ENCODE measurements at regions of chr6 and their contacts with region 1.

Region 1: GRCh38 chr6:34757687-34758274 is 476 bp downstream of the SNRPC start:
- DNase-seq: no peak
- H3K4me3 ChIP-seq: peak overlapping the region; percentile 94
- H3K27ac ChIP-seq: peak overlapping the region; percentile 91; the same call in 1 of the 2 replicates
- H3K4me1 ChIP-seq: peaks cover 8% of the 10 kb centered on the region
- H3K27me3 ChIP-seq: no peaks in the 10 kb centered on the region
- CTCF ChIP-seq: no peak

Region 2: GRCh38 chr6:34182751-34183531 is 574.8 kb before region 1 on chr6:
- CTCF ChIA-PET with region 1: no interaction called
- POLR2A ChIA-PET with region 1: no interaction called
- intact Hi-C with region 1: no loop called
- DNase-seq: no peak
- H3K4me3 ChIP-seq: no peak overlapping the region
- H3K27ac ChIP-seq: no peak overlapping the region
- H3K4me1 ChIP-seq: peaks cover 14% of the 10 kb centered on the region
- H3K27me3 ChIP-seq: no peaks in the 10 kb centered on the region
- CTCF ChIP-seq: no peak

Region 3: GRCh38 chr6:34459899-34460593 is 297.7 kb before region 1 on chr6:
- CTCF ChIA-PET with region 1: no interaction called
- POLR2A ChIA-PET with region 1: no interaction called
- intact Hi-C with region 1: loop called (anchors 10 kb)
- DNase-seq: no peak
- H3K4me3 ChIP-seq: no peak overlapping the region
- H3K27ac ChIP-seq: no peak overlapping the region
- H3K4me1 ChIP-seq: peaks cover 15% of the 10 kb centered on the region
- H3K27me3 ChIP-seq: no peaks in the 10 kb centered on the region
- CTCF ChIP-seq: peak; percentile 86

Region 4: GRCh38 chr6:34656378-34657036 is 101.3 kb before region 1 on chr6:
- CTCF ChIA-PET with region 1: no interaction called
- POLR2A ChIA-PET with region 1: interaction called, 22 read pairs
- intact Hi-C with region 1: loop called (anchors 2 kb)
- DNase-seq: peak in 1 of 2 experiments; percentile 68
- H3K4me3 ChIP-seq: peak overlapping the region; percentile 54; the same call in 1 of the 2 replicates
- H3K27ac ChIP-seq: peak overlapping the region; percentile 96
- H3K4me1 ChIP-seq: peaks cover 54% of the 10 kb centered on the region
- H3K27me3 ChIP-seq: no peaks in the 10 kb centered on the region
- CTCF ChIP-seq: no peak

Region 5: GRCh38 chr6:34696739-34697543 is 60.8 kb before region 1 on chr6 and contains the start of gene ILRUN:
- CTCF ChIA-PET with region 1: no interaction called
- POLR2A ChIA-PET with region 1: interaction called, 23 read pairs
- intact Hi-C with region 1: loop called (anchors 1 kb)
- DNase-seq: peak; percentile 79 to 96
- H3K4me3 ChIP-seq: peak within 1 kb of the TSS; percentile 99
- H3K27ac ChIP-seq: peak within 1 kb of the TSS; percentile 51
- H3K4me1 ChIP-seq: peaks cover 29% of the 10 kb centered on the region
- H3K27me3 ChIP-seq: no peaks in the 10 kb centered on the region
- CTCF ChIP-seq: no peak
- total RNA-seq, gene ILRUN: 57.8 and 68.9 TPM in 2 replicates

Region 6: DNA sequence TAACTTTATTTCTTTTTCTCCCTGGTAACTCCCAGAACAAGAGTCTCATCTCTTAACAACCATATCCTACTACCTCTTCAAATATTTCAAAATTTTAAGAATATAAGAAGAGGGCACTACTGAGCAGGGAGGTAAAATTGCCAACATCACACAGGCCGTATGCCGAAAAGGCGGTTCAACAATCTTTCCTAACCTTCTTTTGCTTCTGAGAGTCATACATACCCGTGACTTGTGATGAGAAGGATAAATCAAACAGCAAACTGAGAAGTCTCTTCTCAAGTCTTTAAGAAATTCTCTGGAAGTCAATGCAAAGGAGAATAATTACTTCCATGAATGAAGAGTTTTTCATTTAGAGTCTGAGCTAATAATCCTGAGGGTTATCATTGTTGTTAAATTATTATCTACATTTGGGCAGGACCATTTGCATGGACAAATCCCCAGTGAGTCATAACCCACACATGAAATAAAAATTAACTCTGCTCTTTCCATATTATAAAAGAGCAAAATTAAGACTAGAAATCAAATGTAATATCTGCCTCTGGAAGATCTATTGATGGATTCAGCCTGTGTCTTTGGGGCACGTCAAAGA is 38.8 kb before region 1 on chr6:
- CTCF ChIA-PET with region 1: no interaction called
- POLR2A ChIA-PET with region 1: no interaction called
- intact Hi-C with region 1: loop called (anchors 5 kb)
- DNase-seq: no peak
- H3K4me3 ChIP-seq: no peak overlapping the region; the same call in 1 of the 2 replicates
- H3K27ac ChIP-seq: peak overlapping the region; percentile 73
- H3K4me1 ChIP-seq: peaks cover 45% of the 10 kb centered on the region
- H3K27me3 ChIP-seq: no peaks in the 10 kb centered on the region
- CTCF ChIP-seq: no peak

Region 7: GRCh38 chr6:34887753-34888513 is 130.2 kb after region 1 on chr6 and contains the start of gene TAF11:
- CTCF ChIA-PET with region 1: no interaction called
- POLR2A ChIA-PET with region 1: interaction called, 5 read pairs
- intact Hi-C with region 1: loop called (anchors 1 kb)
- DNase-seq: peak; percentile 87 to 90
- H3K4me3 ChIP-seq: peak within 1 kb of the TSS; percentile 91
- H3K27ac ChIP-seq: peak within 1 kb of the TSS; percentile 57
- H3K4me1 ChIP-seq: peaks cover 21% of the 10 kb centered on the region
- H3K27me3 ChIP-seq: no peaks in the 10 kb centered on the region
- CTCF ChIP-seq: no peak
- total RNA-seq, gene TAF11: 26.7 and 27.2 TPM in 2 replicates

Region 8: DNA sequence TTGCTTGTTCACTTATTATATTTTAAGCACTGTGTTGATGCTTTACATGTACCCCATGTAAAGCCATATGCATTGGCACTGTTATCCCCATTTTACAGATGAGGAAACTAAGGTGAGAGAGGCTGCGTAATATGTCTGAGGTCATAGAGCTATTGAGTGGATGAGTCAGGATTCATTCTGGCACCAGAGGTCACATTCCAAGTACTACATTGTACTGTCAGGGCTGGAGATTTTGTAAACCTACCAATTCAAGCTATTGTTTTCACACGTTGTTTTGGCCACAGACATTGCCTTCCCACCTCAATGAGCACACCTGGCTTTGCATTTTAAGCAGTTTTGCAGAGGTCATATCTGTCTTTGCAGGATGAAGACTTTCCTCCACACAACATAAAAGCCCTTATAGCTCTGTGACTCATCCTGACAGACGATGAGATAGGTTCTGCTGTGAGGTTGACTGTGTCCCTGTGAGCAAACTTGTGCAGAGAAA is 164.4 kb after region 1 on chr6:
- CTCF ChIA-PET with region 1: no interaction called
- POLR2A ChIA-PET with region 1: no interaction called
- intact Hi-C with region 1: no loop called
- DNase-seq: peak; percentile 5 to 70
- H3K4me3 ChIP-seq: no peak overlapping the region
- H3K27ac ChIP-seq: no peak overlapping the region; the same call in 1 of the 2 replicates
- H3K4me1 ChIP-seq: 0 out of 2 replicates have a peak, but pooled peaks cover 7% of the 10 kb centered on the region
- H3K27me3 ChIP-seq: no peaks in the 10 kb centered on the region
- CTCF ChIP-seq: no peak

Measured in PC-9 (cell line).